Cardiac septum (tissue), 1 donor: ENCODE measurements at regions of chr1 and their contacts with region 1.

Region 1: GRCh38 chr1:161382214-161383019 is 14.7 kb upstream of the CFAP126 start:
- DNase-seq: no peak

Region 2: DNA sequence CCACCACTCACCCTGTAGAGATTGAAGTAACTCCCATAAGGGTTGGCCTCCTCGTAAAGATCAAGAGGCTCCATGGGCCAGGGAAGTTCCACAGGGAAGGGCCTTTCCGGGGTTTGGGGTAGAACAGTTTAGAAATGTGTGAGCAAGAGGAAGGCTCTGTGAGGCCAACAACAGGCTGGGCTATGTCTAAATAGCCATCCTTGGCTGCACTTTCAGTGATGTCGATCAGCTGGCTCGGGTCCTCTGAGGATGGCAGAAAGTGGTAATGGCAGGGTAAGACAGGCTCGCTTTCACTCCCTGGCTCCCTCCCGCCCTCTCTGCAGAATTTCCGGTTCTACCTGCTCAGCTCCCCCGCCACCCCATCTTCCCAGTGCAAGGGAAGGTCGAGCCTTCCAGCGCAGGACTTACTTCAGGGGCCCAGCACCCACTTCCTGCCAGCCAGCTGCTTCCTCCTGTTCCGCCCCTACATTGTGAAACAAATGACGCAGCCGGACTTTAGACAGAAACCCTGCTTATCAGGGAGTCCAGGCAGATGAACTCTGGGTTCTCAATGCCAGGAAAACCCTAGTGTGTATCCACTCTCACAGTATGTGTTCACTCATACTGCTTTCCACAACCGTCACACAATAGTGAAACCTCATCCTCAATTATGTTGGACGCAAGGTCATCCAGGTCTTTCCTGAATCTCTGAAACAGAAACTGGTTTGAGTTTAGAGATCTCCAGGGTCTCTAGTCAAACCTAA is 368.8 kb before region 1 on chr1:
- intact Hi-C with region 1: no loop called
- DNase-seq: peak; percentile 94

Region 3: GRCh38 chr1:161225534-161226319 is 156.7 kb before region 1 on chr1 and contains the start of gene TOMM40L:
- intact Hi-C with region 1: loop called (anchors 5 kb)
- DNase-seq: peak; percentile 91
- total RNA-seq, gene TOMM40L: 34.1 TPM